Common myeloid progenitor, CD34-positive (primary cell): ENCODE measurements at regions of chr10 and their contacts with region 1.

Region 1: DNA sequence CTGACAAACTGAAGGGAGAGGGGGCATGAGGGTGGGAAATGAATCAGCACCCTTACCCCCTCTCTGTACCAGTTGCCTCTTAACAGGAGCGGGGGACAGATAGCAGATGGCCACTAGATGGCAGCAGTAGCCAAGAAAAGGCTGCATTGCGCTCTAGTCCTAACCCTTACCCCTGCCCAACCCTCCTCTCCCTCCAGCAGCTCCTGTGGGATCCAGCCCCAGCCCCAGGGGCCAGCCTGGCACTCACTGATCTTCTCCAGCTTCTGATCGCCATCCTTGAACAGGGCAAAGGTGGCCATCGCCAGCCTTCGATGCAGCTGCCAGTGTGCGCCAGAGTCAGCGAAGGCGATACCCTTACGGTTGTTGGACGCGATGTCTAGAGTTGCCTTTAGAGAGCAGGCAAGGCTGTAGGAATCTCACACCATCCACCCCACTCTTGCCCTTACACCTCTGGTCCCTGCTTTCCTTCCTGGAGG is 2.2 kb downstream of the CYP17A1 start:
- DNase-seq: peak; percentile 78 to 89 (median 83)
- H3K4me3 ChIP-seq: no peak overlapping the region
- H3K27ac ChIP-seq: no peak overlapping the region
- H3K4me1 ChIP-seq: peaks cover 0 to 9% (median 6%) of the 10 kb centered on the region in 4 experiments
- H3K27me3 ChIP-seq: peaks cover 0 to 2% (median 0%) of the 10 kb centered on the region in 5 experiments

Region 2: GRCh38 chr10:102710610-102711009 is 124.4 kb before region 1 on chr10:
- CTCF ChIA-PET with region 1: no interaction called
- POLR2A ChIA-PET with region 1: no interaction called
- DNase-seq: peak; percentile 16 to 56 (median 48)
- H3K4me3 ChIP-seq: no peak overlapping the region
- H3K27ac ChIP-seq: no peak overlapping the region
- H3K4me1 ChIP-seq: peaks cover 8 to 32% (median 18%) of the 10 kb centered on the region in 4 experiments
- H3K27me3 ChIP-seq: no peaks in the 10 kb centered on the region

Region 3: GRCh38 chr10:102904346-102904745 is 69.3 kb after region 1 on chr10:
- CTCF ChIA-PET with region 1: interaction called, 42 read pairs
- POLR2A ChIA-PET with region 1: no interaction called
- DNase-seq: no peak
- H3K4me3 ChIP-seq: no peak overlapping the region
- H3K27ac ChIP-seq: no peak overlapping the region
- H3K4me1 ChIP-seq: peaks cover 0 to 11% (median 3%) of the 10 kb centered on the region in 4 experiments
- H3K27me3 ChIP-seq: no peaks in the 10 kb centered on the region

Region 4: DNA sequence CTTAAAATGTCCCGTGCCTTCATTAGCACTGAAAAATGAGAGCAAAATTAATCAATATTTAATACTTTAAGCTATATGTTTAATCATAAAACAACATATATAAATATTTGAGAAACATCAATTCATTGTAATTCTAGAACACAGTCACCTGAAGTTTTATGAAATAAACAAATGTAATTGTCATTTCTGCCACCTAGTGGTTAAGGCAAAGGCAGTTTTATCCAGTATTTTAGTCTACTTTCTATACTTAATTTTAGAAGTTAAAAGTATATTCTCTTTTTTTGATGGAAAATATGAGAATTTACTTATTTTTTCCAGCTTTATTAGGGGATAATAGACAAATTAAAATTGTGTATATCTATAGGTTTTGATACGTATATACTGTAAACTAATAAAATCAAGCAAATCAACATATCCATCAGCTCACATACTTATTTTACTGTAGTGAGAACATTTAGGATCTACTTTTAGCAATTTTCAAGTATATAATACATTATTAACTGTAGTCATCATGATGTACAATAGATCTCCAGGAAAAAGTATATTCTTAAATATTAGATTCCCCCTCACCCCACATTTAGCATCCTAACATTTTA is 499.0 kb after region 1 on chr10:
- CTCF ChIA-PET with region 1: interaction called, 23 read pairs
- POLR2A ChIA-PET with region 1: no interaction called
- DNase-seq: peak; percentile 26 to 61 (median 48)
- H3K4me3 ChIP-seq: no peak overlapping the region
- H3K27ac ChIP-seq: no peak overlapping the region
- H3K4me1 ChIP-seq: no peaks in the 10 kb centered on the region
- H3K27me3 ChIP-seq: no peaks in the 10 kb centered on the region